ENCODE measurements at regions of chr6 and their contacts with region 1.

Region 1: GRCh38 chr6:170516783-170517616 is 36.1 kb downstream of the PSMB1 start:
- DNase-seq: peak in 3 of 5 donors; percentile 22 to 55 (median 41)
- ATAC-seq: peak in 3 of 4 donors; percentile 73 to 85 (median 74)
- H3K4me3 ChIP-seq: no peak overlapping the region
- H3K27ac ChIP-seq: no peak overlapping the region
- H3K4me1 ChIP-seq: peaks cover 0 to under 1% (median 0%) of the 10 kb centered on the region in 12 donors
- H3K27me3 ChIP-seq: no peaks in the 10 kb centered on the region
- CTCF ChIP-seq: peak; percentile 55 to 77 (median 68)
- POLR2A ChIP-seq: no peak

Region 2: DNA sequence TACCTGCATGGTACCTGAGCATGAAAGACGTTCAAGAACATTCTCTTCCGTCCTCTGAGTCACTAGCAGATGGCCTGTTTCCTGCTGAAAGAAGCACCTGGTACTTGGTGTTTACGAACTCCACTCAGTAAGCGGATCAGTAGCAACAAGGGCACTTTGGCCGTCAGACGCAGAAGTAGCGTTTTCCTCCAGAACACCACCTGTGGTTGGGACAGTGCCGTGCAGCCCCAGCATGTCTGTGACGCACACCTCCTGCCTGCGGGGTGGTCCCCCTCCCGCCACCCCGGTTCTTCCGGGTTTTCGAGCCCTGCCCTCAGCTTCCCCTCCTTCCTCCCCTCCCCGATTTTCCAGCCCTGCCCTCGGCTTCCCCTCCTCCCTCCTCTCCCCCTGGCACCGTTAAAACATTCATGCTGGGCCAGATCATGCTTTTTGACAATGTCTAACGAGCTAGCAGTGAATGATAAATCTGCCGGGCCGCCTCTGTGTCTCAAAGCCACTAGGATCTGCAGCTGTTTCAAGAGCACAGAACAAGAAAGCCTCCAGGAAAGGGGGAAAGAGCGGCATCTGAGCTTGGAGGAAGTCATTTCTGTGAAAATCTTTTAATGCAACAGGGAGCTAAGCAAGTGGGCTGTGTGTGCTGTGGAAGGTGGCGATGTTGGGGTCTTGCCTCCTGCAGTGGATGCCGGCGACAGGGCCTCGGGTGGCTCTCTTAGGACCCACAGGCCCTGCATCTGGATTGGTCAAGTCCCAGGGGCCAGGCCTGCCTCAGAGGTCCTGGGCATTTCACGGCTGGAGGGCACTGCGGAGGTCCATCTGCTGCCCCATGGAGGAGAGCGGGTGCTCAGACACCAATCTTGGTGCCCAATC is 557.6 kb before region 1 on chr6:
- intact Hi-C with region 1: loop called in 7 of 10 experiments (anchors 5 to 10 kb)
- DNase-seq: peak in 1 of 5 donors; percentile 27
- ATAC-seq: peak in 2 of 4 donors; percentile 28 to 53
- H3K4me3 ChIP-seq: no peak overlapping the region
- H3K27ac ChIP-seq: no peak overlapping the region
- H3K4me1 ChIP-seq: peaks cover 0 to 15% (median 2%) of the 10 kb centered on the region in 12 donors
- H3K27me3 ChIP-seq: peaks cover 0 to 14% (median 0%) of the 10 kb centered on the region in 9 donors
- CTCF ChIP-seq: peak in 1 of 12 donors; percentile 6
- POLR2A ChIP-seq: no peak

Measured in heart left ventricle (tissue), 16 donors.